Endothelial cell of umbilical vein (primary cell): ENCODE measurements at regions of chr3 and their contacts with region 1.

Region 1: DNA sequence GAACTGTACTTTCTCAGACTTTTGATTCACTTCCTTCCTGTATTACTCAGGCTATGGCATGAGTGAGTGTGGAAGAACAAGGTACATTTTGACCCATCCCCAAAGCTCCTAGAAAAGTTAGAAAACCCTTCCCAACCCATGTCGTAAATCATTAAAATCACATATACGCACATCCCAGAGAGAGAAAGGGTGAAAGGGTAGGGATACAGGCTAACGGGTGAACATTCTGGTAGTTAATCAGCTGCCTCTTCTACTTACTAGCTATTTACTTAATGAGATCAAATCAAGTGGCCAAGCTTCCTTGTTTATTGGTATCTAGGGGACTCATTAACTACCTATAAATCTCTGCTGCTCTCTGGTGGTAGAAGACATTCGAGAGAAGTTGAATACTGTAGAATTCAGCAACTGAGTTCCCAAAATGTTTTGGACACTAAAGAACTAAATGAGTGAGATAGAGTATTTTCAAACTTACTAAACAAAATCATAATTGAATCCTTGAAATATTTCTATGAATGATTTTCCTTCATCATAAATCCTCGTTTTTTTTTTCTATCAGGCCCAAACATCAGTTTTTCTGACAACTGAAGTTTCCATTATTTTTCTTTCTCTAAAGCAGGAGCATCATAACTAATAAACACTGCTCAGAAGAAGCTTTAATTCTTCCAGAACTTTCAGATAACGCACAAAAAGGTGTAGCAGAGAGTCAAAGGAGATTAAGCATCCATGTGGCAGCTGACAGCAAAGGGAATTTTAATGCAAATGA is 124.2 kb downstream of the IMPG2 start:
- DNase-seq: peak; percentile 89
- H3K4me3 ChIP-seq: no peak overlapping the region
- H3K27ac ChIP-seq: peak overlapping the region; percentile 81
- H3K4me1 ChIP-seq: peaks cover 23% of the 10 kb centered on the region
- H3K27me3 ChIP-seq: no peaks in the 10 kb centered on the region
- CTCF ChIP-seq: peak; percentile 30 to 42
- POLR2A ChIP-seq: no peak

Region 2: GRCh38 chr3:99833617-99834205 is 1362.4 kb before region 1 on chr3:
- CTCF ChIA-PET with region 1: interaction called, 10 read pairs
- POLR2A ChIA-PET with region 1: no interaction called
- dilution Hi-C with region 1: no loop called
- intact Hi-C with region 1: no loop called
- DNase-seq: peak; percentile 87
- H3K4me3 ChIP-seq: no peak overlapping the region
- H3K27ac ChIP-seq: no peak overlapping the region
- H3K4me1 ChIP-seq: peaks cover 23% of the 10 kb centered on the region
- H3K27me3 ChIP-seq: no peaks in the 10 kb centered on the region
- CTCF ChIP-seq: no peak
- POLR2A ChIP-seq: no peak

Region 3: DNA sequence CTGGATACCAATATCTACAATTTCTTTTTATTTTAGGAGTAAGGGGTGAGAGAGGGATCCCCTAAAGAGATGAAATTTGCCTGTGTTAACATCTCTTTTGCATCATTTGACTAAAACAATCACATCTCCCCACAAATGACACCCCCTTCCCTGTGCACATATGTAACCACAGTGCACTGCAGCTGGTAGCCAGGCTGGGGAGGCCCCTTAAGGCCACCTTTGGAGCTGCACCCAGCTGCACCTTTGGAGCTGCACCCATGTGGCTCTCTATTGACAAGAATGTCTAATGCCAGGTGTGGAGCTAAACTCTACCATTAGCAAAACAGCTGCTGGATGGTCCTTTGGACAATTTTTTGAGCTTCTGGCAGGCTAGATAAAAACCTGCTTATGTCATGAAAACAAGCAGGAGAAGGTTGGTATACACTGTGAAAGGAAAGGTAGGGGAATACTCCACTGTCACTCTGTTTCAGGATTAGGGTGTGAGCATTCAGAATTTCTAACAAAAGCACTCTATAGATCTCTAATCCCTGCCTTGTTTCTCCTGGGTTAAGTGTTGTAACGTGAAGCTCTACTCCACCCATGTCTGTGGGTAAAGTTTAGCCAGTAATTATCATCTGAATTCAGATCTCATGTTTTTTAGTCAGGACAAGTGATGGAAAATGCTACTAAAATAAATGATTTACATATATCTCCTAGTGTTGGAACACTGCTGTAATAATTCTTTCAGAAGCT is 434.8 kb before region 1 on chr3:
- CTCF ChIA-PET with region 1: interaction called, 17 read pairs
- POLR2A ChIA-PET with region 1: no interaction called
- dilution Hi-C with region 1: no loop called
- intact Hi-C with region 1: no loop called
- DNase-seq: peak; percentile 4
- H3K4me3 ChIP-seq: no peak overlapping the region
- H3K27ac ChIP-seq: no peak overlapping the region
- H3K4me1 ChIP-seq: no peaks in the 10 kb centered on the region
- H3K27me3 ChIP-seq: no peaks in the 10 kb centered on the region
- CTCF ChIP-seq: no peak
- POLR2A ChIP-seq: no peak

Region 4: GRCh38 chr3:100882571-100882984 is 313.6 kb before region 1 on chr3:
- CTCF ChIA-PET with region 1: interaction called, 13 read pairs
- POLR2A ChIA-PET with region 1: no interaction called
- dilution Hi-C with region 1: no loop called
- intact Hi-C with region 1: no loop called
- DNase-seq: peak; percentile 57
- H3K4me3 ChIP-seq: no peak overlapping the region
- H3K27ac ChIP-seq: no peak overlapping the region
- H3K4me1 ChIP-seq: peaks cover 5% of the 10 kb centered on the region
- H3K27me3 ChIP-seq: no peaks in the 10 kb centered on the region
- CTCF ChIP-seq: no peak
- POLR2A ChIP-seq: no peak

Region 5: GRCh38 chr3:100982710-100983109 is 213.4 kb before region 1 on chr3:
- CTCF ChIA-PET with region 1: interaction called, 14 read pairs
- POLR2A ChIA-PET with region 1: no interaction called
- dilution Hi-C with region 1: no loop called
- intact Hi-C with region 1: no loop called
- DNase-seq: peak; percentile 81
- H3K4me3 ChIP-seq: no peak overlapping the region
- H3K27ac ChIP-seq: no peak overlapping the region
- H3K4me1 ChIP-seq: peaks cover 3% of the 10 kb centered on the region
- H3K27me3 ChIP-seq: no peaks in the 10 kb centered on the region
- CTCF ChIP-seq: no peak
- POLR2A ChIP-seq: no peak

Region 6: GRCh38 chr3:101077361-101078011 is 118.6 kb before region 1 on chr3:
- CTCF ChIA-PET with region 1: interaction called, 29 read pairs
- POLR2A ChIA-PET with region 1: no interaction called
- dilution Hi-C with region 1: no loop called
- intact Hi-C with region 1: no loop called
- DNase-seq: peak; percentile 83
- H3K4me3 ChIP-seq: no peak overlapping the region
- H3K27ac ChIP-seq: no peak overlapping the region
- H3K4me1 ChIP-seq: peaks cover 29% of the 10 kb centered on the region
- H3K27me3 ChIP-seq: no peaks in the 10 kb centered on the region
- CTCF ChIP-seq: no peak
- POLR2A ChIP-seq: no peak